ENCODE measurements at regions of chr11 and their contacts with region 1.

Region 1: DNA sequence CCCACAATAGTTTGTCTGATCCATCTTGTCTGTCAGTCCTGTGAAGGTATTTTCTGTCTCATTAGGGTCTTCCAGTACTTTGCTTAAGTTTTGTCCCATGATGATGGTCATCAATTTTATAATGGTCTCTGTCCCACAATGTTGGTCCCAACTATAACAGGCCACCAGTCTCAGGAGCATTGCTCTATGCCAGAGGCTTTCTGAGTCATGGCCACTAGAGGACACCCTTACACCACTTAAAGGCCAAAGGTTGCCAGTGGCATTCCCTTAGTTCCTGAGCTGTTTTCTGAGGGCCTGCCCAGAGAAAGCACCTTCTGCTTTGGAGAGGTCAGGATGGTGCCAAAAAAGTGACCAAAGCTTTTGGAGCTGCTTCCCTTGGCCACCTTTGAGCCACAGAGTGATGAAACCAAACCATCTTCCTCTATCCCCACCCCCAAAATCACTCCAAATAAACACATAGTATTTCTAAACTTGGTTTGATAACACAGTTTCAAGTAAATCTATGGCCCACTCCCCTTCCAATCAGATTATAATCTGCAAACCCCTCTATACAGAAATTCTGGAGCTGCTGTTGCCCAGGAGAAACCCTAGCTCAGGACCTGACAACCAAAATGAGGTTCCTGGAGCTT is 19.3 kb downstream of the EIF3F start:
- DNase-seq: peak; percentile 45 to 60 (median 50)
- H3K4me3 ChIP-seq: no peak overlapping the region
- H3K4me3 Mint-ChIP-seq: no peak overlapping the region
- H3K27ac ChIP-seq: no peak overlapping the region
- H3K27ac Mint-ChIP-seq: peak overlapping the region in 2 of 7 donors; percentile 7 to 39
- H3K4me1 ChIP-seq: no peaks in the 10 kb centered on the region
- H3K4me1 Mint-ChIP-seq: no peaks in the 10 kb centered on the region
- H3K27me3 ChIP-seq: no peaks in the 10 kb centered on the region
- H3K27me3 Mint-ChIP-seq: peaks cover 0 to 4% of the 10 kb centered on the region in 2 donors

Region 2: GRCh38 chr11:7949934-7950333 is 56.5 kb before region 1 on chr11:
- CTCF ChIA-PET with region 1: no interaction called
- POLR2A ChIA-PET with region 1: no interaction called
- intact Hi-C with region 1: no loop called
- DNase-seq: no peak
- H3K4me3 ChIP-seq: no peak overlapping the region
- H3K4me3 Mint-ChIP-seq: no peak overlapping the region
- H3K27ac ChIP-seq: no peak overlapping the region
- H3K27ac Mint-ChIP-seq: no peak overlapping the region
- H3K4me1 ChIP-seq: no peaks in the 10 kb centered on the region
- H3K4me1 Mint-ChIP-seq: no peaks in the 10 kb centered on the region
- H3K27me3 ChIP-seq: no peaks in the 10 kb centered on the region
- H3K27me3 Mint-ChIP-seq: peaks cover 14 to 16% of the 10 kb centered on the region in 2 donors

Region 3: DNA sequence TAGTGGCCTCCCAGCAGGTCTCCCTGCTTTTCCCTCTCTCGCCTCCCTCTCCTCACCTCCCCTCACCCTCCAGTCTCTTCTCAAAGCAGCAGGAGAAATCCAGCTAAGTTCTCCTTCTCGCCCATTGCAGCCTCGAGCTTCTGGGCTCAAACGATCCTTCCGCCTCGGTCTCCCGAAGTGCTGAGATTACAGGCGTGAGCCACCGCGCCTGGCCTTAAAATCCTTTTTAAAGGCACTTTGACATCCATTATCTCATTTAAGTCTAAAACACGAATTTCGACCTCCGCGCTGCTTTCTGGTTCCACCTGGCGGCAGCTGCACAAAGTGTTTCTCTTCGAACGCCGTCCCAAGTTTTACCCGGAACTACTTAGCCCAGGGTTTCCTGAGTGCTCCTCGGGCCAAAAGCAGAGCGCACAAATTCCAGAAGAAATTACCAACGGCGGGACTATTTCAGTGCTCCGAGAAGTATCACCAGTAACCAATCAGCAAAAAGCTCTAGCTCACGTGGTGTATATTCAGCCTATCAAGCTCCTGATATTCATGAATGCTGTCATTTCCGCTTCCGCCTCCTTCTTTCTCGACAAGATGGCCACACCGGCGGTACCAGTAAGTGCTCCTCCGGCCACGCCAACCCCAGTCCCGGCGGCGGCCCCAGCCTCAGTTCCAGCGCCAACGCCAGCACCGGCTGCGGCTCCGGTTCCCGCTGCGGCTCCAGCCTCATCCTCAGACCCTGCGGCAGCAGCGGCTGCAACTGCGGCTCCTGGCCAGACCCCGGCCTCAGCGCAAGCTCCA is 19.5 kb before region 1 on chr11 and contains the start of gene EIF3F:
- CTCF ChIA-PET with region 1: interaction called, 14 read pairs
- POLR2A ChIA-PET with region 1: no interaction called
- intact Hi-C with region 1: no loop called
- DNase-seq: peak; percentile 93 to 98 (median 96)
- H3K4me3 ChIP-seq: peak within 1 kb of the TSS; percentile 63 to 77
- H3K4me3 Mint-ChIP-seq: peak within 1 kb of the TSS; percentile 89 to 97 (median 95)
- H3K27ac ChIP-seq: peak within 1 kb of the TSS; percentile 77
- H3K27ac Mint-ChIP-seq: peak within 1 kb of the TSS; percentile 89 to 99 (median 98)
- H3K4me1 ChIP-seq: peaks cover 36% of the 10 kb centered on the region
- H3K4me1 Mint-ChIP-seq: peaks cover 29 to 59% (median 46%) of the 10 kb centered on the region in 4 donors
- H3K27me3 ChIP-seq: no peaks in the 10 kb centered on the region
- H3K27me3 Mint-ChIP-seq: no peaks in the 10 kb centered on the region
- total RNA-seq, gene EIF3F: 317 to 330 TPM

Region 4: DNA sequence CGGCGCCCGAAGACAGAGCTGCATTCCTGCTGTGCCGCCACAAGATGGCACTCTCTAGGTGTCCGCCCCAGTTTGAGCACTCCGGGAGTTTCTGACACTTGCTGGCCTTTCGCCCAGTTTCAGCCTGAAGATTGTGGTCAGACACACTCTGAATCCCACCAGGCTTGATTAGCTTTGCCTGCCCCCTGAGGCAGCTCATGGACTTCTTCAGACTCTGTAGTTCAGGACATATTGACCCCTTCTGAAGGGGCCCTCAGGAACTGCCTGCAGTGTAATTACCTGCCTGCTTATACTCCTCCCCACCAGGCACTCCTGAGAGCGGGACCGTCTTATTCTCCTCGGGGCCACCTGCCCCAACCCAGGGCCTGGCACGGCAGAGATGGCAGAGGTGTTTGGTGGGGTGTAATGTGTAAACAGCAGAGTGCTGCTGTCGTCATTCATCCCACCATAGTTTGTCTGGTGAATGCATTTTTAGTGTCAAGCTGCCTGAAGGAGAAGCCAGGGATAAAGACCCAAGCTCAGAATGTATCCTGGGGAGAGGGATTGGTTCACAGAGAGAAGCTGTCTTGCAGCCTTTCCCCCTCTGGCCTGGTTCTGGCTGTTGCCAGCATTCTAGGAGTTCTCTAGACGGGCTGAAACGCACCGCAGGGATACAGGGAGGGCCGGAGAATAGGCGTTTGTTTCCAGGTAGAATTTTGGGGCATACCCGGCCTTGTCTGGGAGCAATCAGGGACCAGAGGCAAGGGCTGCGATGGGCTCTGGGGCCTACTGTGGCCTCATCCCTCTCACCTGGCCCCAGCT is 27.0 kb after region 1 on chr11:
- CTCF ChIA-PET with region 1: interaction called, 21 read pairs
- POLR2A ChIA-PET with region 1: no interaction called
- intact Hi-C with region 1: no loop called
- DNase-seq: peak in 4 of 5 donors; percentile 42 to 48 (median 46)
- H3K4me3 ChIP-seq: no peak overlapping the region
- H3K4me3 Mint-ChIP-seq: peak overlapping the region; percentile 6 to 81 (median 54)
- H3K27ac ChIP-seq: no peak overlapping the region
- H3K27ac Mint-ChIP-seq: peak overlapping the region in 5 of 7 donors; percentile 7 to 82 (median 72)
- H3K4me1 ChIP-seq: peaks cover 9% of the 10 kb centered on the region
- H3K4me1 Mint-ChIP-seq: peaks cover 8 to 12% (median 9%) of the 10 kb centered on the region in 4 donors
- H3K27me3 ChIP-seq: no peaks in the 10 kb centered on the region
- H3K27me3 Mint-ChIP-seq: peaks cover 6 to 23% of the 10 kb centered on the region in 2 donors

Region 5: DNA sequence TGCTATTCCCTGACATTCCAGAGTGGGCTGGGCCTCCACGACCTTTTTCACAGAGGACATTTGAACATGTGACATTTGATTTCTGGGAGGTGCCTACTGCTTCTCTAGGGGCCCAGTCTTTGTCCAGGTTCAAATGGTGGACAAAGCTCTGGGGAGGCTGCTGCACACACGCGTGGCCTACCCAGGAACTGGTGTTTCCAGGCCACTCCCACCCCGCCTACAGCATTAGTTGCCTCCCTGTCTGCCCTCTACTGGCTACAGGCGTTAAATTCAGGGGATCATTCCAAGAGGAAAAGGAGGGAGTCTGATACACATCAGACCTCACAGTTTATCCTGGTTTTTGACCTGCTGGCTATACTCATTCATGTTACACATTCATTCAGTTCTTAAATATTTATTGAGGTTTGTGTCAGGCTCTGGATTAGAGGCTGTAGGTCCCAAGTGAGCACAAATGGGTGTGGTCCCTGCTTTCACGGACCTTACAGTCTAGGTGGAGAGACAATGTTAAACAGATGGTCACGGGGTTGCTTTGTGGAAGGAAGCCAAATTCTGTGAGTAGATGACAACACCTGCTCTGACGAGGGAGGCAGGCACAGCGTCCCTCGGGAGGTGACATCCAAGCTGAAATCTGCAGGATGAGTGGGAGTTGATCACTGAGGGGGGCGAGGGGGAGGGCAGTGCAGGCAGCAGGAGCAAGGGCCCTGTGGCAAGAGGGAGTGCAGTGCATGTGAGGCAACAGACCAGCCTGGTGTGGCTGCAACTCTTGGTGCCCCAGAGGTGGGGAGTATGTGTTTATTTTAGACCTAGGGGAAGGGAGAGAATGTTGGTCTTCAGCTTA is 86.3 kb after region 1 on chr11:
- CTCF ChIA-PET with region 1: interaction called, 230 read pairs
- POLR2A ChIA-PET with region 1: interaction called, 3 read pairs
- intact Hi-C with region 1: no loop called
- DNase-seq: peak in 3 of 5 donors; percentile 16 to 19 (median 16)
- H3K4me3 ChIP-seq: no peak overlapping the region
- H3K4me3 Mint-ChIP-seq: no peak overlapping the region
- H3K27ac ChIP-seq: no peak overlapping the region
- H3K27ac Mint-ChIP-seq: no peak overlapping the region
- H3K4me1 ChIP-seq: no peaks in the 10 kb centered on the region
- H3K4me1 Mint-ChIP-seq: peaks cover 0 to 5% (median 0%) of the 10 kb centered on the region in 4 donors
- H3K27me3 ChIP-seq: no peaks in the 10 kb centered on the region
- H3K27me3 Mint-ChIP-seq: no peaks in the 10 kb centered on the region

Region 6: DNA sequence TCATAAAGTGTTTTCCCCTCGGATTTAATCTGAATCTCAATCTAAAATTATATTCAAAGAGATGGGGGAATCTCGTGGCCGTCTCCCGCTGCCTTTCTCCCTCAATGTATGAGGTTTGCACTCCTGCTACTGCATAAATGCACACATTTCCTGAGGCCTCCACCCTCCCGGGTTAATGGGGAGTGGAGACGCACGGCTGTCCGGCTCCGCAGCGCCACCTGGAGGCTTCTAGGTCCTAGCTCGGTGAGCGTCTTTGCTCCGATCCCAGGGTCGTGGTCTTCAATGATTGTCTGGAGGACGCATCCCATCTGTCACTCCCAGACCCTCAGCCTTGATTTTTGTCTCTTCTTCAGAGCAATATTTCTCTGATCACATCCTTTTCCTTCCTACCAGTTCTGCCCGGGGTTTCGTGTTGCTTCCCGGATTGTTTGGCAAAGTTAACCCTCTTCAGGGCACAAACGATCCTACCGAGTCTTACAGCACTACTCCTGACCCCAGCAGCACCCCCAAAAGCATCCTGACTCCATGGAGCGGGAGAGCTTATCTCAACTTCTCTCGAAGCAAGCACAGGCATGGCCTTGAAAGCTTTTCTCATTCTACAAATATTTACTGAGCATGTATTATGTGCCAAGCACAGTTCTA is 257.4 kb after region 1 on chr11 and contains the start of gene LMO1:
- CTCF ChIA-PET with region 1: no interaction called
- POLR2A ChIA-PET with region 1: no interaction called
- intact Hi-C with region 1: loop called (anchors 5 kb)
- DNase-seq: peak; percentile 58 to 62 (median 59)
- H3K4me3 ChIP-seq: no peak within 1 kb of the TSS
- H3K4me3 Mint-ChIP-seq: peak within 1 kb of the TSS; percentile 67 to 88 (median 76)
- H3K27ac ChIP-seq: no peak within 1 kb of the TSS
- H3K27ac Mint-ChIP-seq: peak within 1 kb of the TSS in 2 of 7 donors; percentile 43 to 49
- H3K4me1 ChIP-seq: peaks cover 13% of the 10 kb centered on the region
- H3K4me1 Mint-ChIP-seq: peaks cover 11 to 17% (median 12%) of the 10 kb centered on the region in 4 donors
- H3K27me3 ChIP-seq: peaks cover 26% of the 10 kb centered on the region
- H3K27me3 Mint-ChIP-seq: peaks cover 22 to 57% of the 10 kb centered on the region in 2 donors
- total RNA-seq, gene LMO1: not detected

Measured in CD4-positive, alpha-beta memory T cell (primary cell).